Psoas muscle (tissue), 8 donors: ENCODE measurements at regions of chr6 and their contacts with region 1.

Region 1: GRCh38 chr6:63764318-63764916 is 128.8 kb downstream of the PHF3 start:
- DNase-seq: no peak
- ATAC-seq: peak in 2 of 4 donors; percentile 45 to 56
- H3K4me3 ChIP-seq: no peak overlapping the region
- H3K27ac ChIP-seq: no peak overlapping the region
- H3K4me1 ChIP-seq: no peaks in the 10 kb centered on the region
- H3K27me3 ChIP-seq: no peaks in the 10 kb centered on the region
- CTCF ChIP-seq: peak; percentile 80

Region 2: DNA sequence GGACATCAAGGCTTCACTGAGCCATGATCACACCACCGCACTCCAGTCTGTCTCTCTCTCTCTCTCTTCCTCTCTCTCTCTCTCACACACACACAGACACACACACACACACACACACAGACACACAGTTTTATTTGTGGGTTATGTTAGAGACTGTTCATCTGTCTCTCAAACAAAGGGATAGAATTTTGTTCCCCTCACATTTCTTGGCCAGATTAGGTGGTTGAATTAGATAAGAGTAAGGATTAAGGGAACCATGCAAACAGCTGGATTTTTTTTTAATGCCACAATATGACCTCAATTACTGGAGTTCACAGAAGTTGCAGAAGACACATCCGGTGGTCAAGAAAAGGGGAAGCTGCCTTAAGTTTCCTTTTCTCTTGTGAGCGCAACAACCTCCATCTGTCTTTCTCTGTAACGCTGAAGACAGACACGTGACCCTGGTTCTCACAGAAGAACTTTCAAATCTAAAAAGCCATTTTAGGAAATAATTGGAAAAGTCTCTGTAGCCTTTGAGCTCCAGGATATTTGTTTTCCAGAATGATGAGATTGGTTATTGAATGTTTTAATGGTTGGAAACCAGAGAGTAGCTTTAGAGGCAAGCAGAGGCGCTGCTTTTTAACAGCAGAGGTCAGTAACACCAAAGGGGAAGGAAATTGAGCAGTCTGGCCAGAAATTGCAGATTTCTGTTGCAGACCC is 411.7 kb before region 1 on chr6:
- intact Hi-C with region 1: loop called (anchors 5 kb)
- DNase-seq: no peak
- ATAC-seq: peak; percentile 64 to 95 (median 76)
- H3K4me3 ChIP-seq: peak overlapping the region; percentile 21
- H3K27ac ChIP-seq: peak overlapping the region; percentile 10
- H3K4me1 ChIP-seq: peaks cover 4% of the 10 kb centered on the region
- H3K27me3 ChIP-seq: no peaks in the 10 kb centered on the region
- CTCF ChIP-seq: peak; percentile 62

Region 3: GRCh38 chr6:63598049-63599036 is 166.1 kb before region 1 on chr6:
- intact Hi-C with region 1: loop called (anchors 2 kb)
- DNase-seq: peak; percentile 57 to 76
- ATAC-seq: peak; percentile 91 to 99 (median 94)
- H3K4me3 ChIP-seq: peak overlapping the region; percentile 75
- H3K27ac ChIP-seq: no peak overlapping the region
- H3K4me1 ChIP-seq: peaks cover 6% of the 10 kb centered on the region
- H3K27me3 ChIP-seq: no peaks in the 10 kb centered on the region
- CTCF ChIP-seq: peak; percentile 89